Heart left ventricle (tissue), 16 donors: ENCODE measurements at regions of chr12 and their contacts with region 1.

Region 1: GRCh38 chr12:6735448-6736191 is 11.8 kb downstream of the COPS7A start:
- DNase-seq: peak; percentile 54 to 76 (median 67)
- ATAC-seq: peak; percentile 58 to 93 (median 91)
- H3K4me3 ChIP-seq: no peak overlapping the region
- H3K27ac ChIP-seq: peak overlapping the region in 9 of 12 donors; percentile 0 to 55 (median 34)
- H3K4me1 ChIP-seq: peaks cover 0 to 12% (median 0%) of the 10 kb centered on the region in 12 donors
- H3K27me3 ChIP-seq: no peaks in the 10 kb centered on the region
- CTCF ChIP-seq: peak; percentile 55 to 83 (median 72)
- POLR2A ChIP-seq: no peak

Region 2: GRCh38 chr12:6524648-6525047 is 211.0 kb before region 1 on chr12:
- intact Hi-C with region 1: no loop called
- DNase-seq: no peak
- ATAC-seq: no peak
- H3K4me3 ChIP-seq: no peak overlapping the region
- H3K27ac ChIP-seq: no peak overlapping the region
- H3K4me1 ChIP-seq: no peaks in the 10 kb centered on the region
- H3K27me3 ChIP-seq: no peaks in the 10 kb centered on the region
- CTCF ChIP-seq: no peak
- POLR2A ChIP-seq: no peak

Region 3: DNA sequence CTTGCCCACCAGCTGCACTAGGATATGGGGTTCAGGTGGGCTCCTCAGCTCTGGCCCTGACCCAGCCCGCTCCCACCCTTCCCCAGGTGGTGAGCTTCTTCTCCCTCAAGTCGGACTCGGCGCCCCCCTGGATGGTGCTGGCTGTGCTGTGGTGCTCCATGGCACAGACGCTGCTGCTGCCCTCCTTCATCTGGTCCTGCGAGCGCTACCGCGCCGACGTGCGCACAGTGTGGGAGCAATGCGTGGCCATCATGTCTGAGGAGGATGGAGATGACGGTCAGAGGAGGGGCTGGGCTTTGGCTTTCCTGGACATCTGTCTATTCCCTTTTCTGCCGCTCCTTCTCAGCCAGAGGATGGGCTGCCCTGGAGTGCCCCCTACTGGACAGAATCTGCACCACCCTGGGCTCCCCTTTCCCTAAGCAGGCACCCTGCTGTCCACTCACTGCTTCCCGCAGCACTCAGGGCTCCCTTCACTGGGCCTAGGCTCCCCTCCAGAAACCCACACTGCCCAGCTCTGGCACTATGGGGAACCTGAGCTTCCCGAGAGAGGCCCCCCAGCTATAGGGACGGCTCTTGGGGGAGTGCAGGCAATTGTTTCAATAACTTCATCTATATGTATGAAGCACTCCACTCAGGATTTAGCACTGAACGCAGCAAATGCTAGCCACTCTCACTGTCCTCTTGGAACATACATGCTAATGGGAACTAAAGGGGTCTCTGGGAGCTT is 89.9 kb after region 1 on chr12:
- intact Hi-C with region 1: loop called in 8 of 10 experiments (anchors 1 to 5 kb)
- DNase-seq: peak; percentile 83 to 92 (median 86)
- ATAC-seq: peak; percentile 58 to 69 (median 60)
- H3K4me3 ChIP-seq: peak overlapping the region in 5 of 12 donors; percentile 5 to 36 (median 24)
- H3K27ac ChIP-seq: no peak overlapping the region
- H3K4me1 ChIP-seq: peaks cover 0 to 55% (median 27%) of the 10 kb centered on the region in 12 donors
- H3K27me3 ChIP-seq: peaks cover 0 to 21% (median 0%) of the 10 kb centered on the region in 9 donors
- CTCF ChIP-seq: peak; percentile 82 to 95 (median 91)
- POLR2A ChIP-seq: no peak

Region 4: GRCh38 chr12:6884539-6884938 is 148.9 kb after region 1 on chr12:
- intact Hi-C with region 1: no loop called
- DNase-seq: no peak
- ATAC-seq: peak in 1 of 4 donors; percentile 25
- H3K4me3 ChIP-seq: no peak overlapping the region
- H3K27ac ChIP-seq: no peak overlapping the region
- H3K4me1 ChIP-seq: no peaks in the 10 kb centered on the region
- H3K27me3 ChIP-seq: no peaks in the 10 kb centered on the region
- CTCF ChIP-seq: no peak
- POLR2A ChIP-seq: no peak